ENCODE measurements at regions of chr3 and their contacts with region 1.

Region 1: DNA sequence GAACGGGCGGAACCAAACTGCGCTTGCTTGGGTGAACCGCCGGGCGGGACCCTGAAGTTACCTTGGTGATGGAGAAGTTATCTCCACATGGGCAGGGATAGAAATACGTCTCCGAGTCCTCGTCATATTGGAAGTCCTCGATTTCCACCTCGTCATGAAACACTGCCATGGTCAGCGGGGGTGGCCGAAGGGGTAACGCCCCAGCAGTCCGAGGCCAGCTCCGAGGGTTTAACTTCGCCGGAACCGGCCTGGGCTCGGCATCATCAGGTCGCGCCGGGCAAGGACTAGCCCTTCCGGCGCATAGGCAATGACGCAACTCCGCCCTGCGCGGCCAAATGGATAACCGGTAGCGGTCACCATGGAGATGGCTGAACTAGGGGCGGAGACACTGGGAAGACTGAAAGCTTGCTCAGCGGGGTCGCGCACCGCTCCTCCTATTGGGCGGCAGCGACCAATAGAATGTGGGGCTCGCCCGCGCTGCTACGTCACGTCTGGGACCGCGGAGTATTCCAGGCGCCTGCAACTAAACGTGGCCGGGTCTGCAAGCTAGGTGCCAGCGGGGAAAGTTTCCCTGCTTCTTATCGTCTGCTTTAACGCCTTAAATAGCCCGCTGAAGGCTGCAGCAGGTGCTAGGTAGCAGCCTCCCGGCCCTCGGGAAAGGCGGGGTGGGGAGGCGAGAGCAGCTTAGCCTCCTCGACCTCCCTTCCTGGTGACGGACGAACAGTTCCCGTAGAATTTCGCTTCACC is at the starts of genes DPH3 and OXNAD1:
- DNase-seq: peak; percentile 100
- H3K4me3 ChIP-seq: peak within 1 kb of the TSS; percentile 59 to 93 (median 91)
- H3K4me3 Mint-ChIP-seq: peak within 1 kb of the TSS; percentile 95 to 98
- H3K27ac ChIP-seq: peak within 1 kb of the TSS; percentile 96
- H3K27ac Mint-ChIP-seq: peak within 1 kb of the TSS in 6 of 7 donors; percentile 98 to 99 (median 98)
- H3K4me1 ChIP-seq: peaks cover 24 to 38% of the 10 kb centered on the region in 2 donors
- H3K4me1 Mint-ChIP-seq: peaks cover 20% of the 10 kb centered on the region
- H3K27me3 ChIP-seq: no peaks in the 10 kb centered on the region
- H3K27me3 Mint-ChIP-seq: peaks cover 0 to 2% (median 0%) of the 10 kb centered on the region in 3 donors
- CTCF ChIP-seq: no peak
- polyA plus RNA-seq, gene DPH3: 9.2 to 42.0 (median 33.7) TPM
- polyA plus RNA-seq, gene OXNAD1: 3.7 to 5.1 (median 4.4) TPM

Region 2: GRCh38 chr3:15601397-15602145 is 663.3 kb before region 1 on chr3 and contains the starts of genes BTD and HACL1:
- intact Hi-C with region 1: loop called in 1 of 2 experiments (anchors 10 kb)
- DNase-seq: peak; percentile 95 to 98 (median 96)
- H3K4me3 ChIP-seq: peak within 1 kb of the TSS; percentile 61 to 91 (median 88)
- H3K4me3 Mint-ChIP-seq: peak within 1 kb of the TSS; percentile 96 to 98
- H3K27ac ChIP-seq: peak within 1 kb of the TSS; percentile 69 to 96
- H3K27ac Mint-ChIP-seq: peak within 1 kb of the TSS; percentile 94 to 100 (median 99)
- H3K4me1 ChIP-seq: peaks cover 16 to 20% of the 10 kb centered on the region in 2 donors
- H3K4me1 Mint-ChIP-seq: peaks cover 17% of the 10 kb centered on the region
- H3K27me3 ChIP-seq: no peaks in the 10 kb centered on the region
- H3K27me3 Mint-ChIP-seq: no peaks in the 10 kb centered on the region
- CTCF ChIP-seq: peak; percentile 27
- polyA plus RNA-seq, gene BTD: 13.2 to 24.0 (median 19.3) TPM
- polyA plus RNA-seq, gene HACL1: 12.3 to 27.2 (median 22.3) TPM

Region 3: GRCh38 chr3:16550676-16551341 is 285.9 kb after region 1 on chr3:
- intact Hi-C with region 1: loop called (anchors 5 kb)
- DNase-seq: peak; percentile 75 to 83 (median 81)
- H3K4me3 ChIP-seq: no peak overlapping the region
- H3K4me3 Mint-ChIP-seq: no peak overlapping the region
- H3K27ac ChIP-seq: no peak overlapping the region
- H3K27ac Mint-ChIP-seq: peak overlapping the region in 1 of 7 donors; percentile 61
- H3K4me1 ChIP-seq: no peaks in the 10 kb centered on the region
- H3K4me1 Mint-ChIP-seq: peaks cover 2% of the 10 kb centered on the region
- H3K27me3 ChIP-seq: no peaks in the 10 kb centered on the region
- H3K27me3 Mint-ChIP-seq: no peaks in the 10 kb centered on the region
- CTCF ChIP-seq: peak; percentile 93

Region 4: GRCh38 chr3:17742108-17742879 is 1477.4 kb after region 1 on chr3 and contains the start of gene TBC1D5:
- intact Hi-C with region 1: loop called in 1 of 2 experiments (anchors 10 kb)
- DNase-seq: peak; percentile 94 to 96 (median 95)
- H3K4me3 ChIP-seq: peak within 1 kb of the TSS; percentile 74 to 91 (median 88)
- H3K4me3 Mint-ChIP-seq: peak within 1 kb of the TSS; percentile 95 to 97
- H3K27ac ChIP-seq: peak within 1 kb of the TSS; percentile 94 to 96
- H3K27ac Mint-ChIP-seq: peak within 1 kb of the TSS; percentile 94 to 98 (median 97)
- H3K4me1 ChIP-seq: peaks cover 24 to 36% of the 10 kb centered on the region in 2 donors
- H3K4me1 Mint-ChIP-seq: peaks cover 45% of the 10 kb centered on the region
- H3K27me3 ChIP-seq: no peaks in the 10 kb centered on the region
- H3K27me3 Mint-ChIP-seq: peaks cover 0 to 2% (median 0%) of the 10 kb centered on the region in 3 donors
- CTCF ChIP-seq: no peak
- polyA plus RNA-seq, gene TBC1D5: 17.6 to 35.3 (median 21.0) TPM